ENCODE measurements at regions of chr3 and their contacts with region 1.

Region 1: DNA sequence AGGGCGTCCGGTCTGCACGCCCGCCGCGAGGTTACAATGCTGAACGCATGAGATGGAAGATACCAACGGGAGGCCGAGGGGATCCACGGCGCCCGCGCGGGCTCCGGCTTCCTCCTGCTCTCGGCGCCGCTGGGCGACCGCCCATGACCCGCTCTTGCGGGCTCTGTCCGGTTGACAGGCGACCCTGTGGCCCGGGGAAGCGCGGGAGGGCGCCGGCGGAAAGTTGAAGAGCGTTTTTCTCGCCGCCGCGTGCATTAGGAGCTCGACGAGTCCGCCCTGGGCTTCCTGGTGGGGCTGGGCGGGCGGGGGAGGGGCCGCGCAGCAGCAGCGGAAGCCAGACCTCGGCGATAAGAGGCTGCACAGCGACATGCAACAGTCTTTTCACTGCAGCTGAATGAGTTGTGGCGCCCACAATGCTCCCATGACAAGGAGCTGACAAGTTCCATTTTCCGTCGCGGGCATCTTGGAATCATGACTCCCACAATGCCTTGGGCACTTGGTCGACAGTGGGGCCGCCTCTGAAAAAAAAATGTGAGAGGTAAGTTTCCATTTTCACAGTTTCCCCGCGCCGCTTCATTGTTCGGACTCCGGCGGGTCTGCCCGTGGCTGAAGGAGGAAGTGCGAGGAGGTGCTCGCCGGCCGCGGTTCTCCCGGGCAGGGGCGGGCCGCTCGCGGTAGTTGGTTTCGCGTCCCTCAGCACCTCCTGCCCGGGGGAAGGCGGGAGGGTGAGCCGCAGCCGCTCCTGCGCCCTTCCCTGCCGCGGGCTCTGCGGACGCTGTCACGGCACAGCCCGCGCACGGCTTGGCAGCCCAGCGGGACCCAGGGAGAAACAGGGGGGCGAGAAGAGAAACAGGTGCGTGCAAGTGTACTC is at the start of gene MBNL1:
- DNase-seq: peak; percentile 94
- total RNA-seq, gene MBNL1: 178 TPM

Region 2: DNA sequence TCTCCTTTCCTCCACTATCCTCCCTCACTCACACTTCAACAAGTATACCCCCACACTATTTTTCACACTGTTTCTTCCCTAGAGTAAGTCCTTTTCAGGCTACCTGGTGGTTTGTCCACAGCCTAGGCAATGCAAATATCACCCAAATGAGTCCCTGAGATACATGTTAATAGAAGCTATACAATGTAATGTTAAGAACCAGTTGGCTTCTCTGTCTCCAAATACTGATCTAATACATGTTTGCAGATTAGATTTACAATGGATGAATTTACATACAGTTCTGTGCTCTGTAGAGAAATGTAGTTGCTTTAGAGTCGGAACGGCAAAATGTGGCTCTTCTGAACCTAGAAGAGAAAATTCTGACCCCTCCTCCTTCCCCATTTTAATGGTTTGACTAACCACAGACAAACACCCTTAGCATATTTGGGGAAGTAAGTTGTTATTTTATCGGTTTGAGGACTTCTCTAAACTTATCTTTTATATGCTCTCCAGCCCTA is 63.6 kb before region 1 on chr3:
- intact Hi-C with region 1: loop called (anchors 2 kb)
- DNase-seq: no peak

Region 3: GRCh38 chr3:152319831-152320617 is 51.2 kb after region 1 on chr3:
- intact Hi-C with region 1: loop called (anchors 5 kb)
- DNase-seq: no peak

Region 4: GRCh38 chr3:152405915-152406802 is 137.4 kb after region 1 on chr3:
- intact Hi-C with region 1: loop called (anchors 10 kb)
- DNase-seq: no peak